Prostate gland (tissue), 2 donors: ENCODE measurements at regions of chr17 and their contacts with region 1.

Region 1: GRCh38 chr17:68600067-68600930 is 868 bp downstream of the FAM20A start:
- DNase-seq: no peak
- H3K4me3 ChIP-seq: peak overlapping the region; percentile 25 to 46
- H3K27ac ChIP-seq: peak overlapping the region; percentile 19 to 43
- H3K4me1 ChIP-seq: no peaks in the 10 kb centered on the region
- H3K27me3 ChIP-seq: peaks cover 10% of the 10 kb centered on the region
- CTCF ChIP-seq: peak in 2 of 4 experiments; percentile 32 to 47
- POLR2A ChIP-seq: no peak

Region 2: DNA sequence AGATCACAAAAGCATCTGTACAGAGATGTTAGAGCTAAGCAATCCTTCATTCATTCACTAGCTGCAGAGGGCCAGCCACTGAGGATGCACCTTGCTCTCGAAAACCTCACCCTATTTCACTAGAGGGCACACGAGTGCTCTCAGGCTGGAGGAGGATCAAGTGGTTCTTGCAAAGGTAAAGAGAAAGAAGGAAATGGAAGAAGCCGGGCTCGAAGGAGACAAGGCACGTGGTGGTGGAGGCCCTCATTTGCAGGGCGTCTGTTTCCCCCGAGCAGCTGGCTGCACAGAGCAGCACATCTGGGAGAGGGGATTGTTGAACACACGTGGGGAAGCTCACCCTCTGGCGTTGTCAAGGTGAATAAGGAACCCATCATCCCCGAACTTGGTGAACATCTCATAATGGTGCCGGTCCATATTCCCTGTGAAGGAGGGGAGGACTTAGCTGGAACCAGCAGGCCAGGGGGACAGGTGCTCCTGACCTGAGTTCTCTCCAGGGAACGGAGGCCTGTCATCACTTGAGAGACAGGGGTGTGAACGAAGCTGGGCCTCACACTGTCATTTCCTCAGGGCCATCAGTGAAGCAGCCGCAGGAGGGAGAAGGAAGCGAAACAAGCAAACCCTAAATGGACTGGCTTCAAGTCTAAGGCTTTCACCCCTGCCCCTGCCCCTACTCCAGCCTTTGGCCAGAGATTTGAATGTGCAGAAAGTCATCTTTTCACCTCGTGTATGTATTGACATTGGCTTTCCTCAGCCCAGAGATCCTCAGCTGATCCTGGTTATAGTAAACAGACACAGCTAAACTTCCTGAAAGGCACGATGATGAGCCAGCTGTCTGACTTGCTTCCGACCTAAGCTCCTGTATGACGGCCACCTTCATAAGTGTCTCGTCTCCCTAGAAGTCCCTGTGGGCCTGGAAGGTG is 60.5 kb before region 1 on chr17:
- intact Hi-C with region 1: loop called (anchors 10 kb)
- DNase-seq: no peak
- H3K4me3 ChIP-seq: no peak overlapping the region
- H3K27ac ChIP-seq: no peak overlapping the region
- H3K4me1 ChIP-seq: no peaks in the 10 kb centered on the region
- H3K27me3 ChIP-seq: no peaks in the 10 kb centered on the region
- CTCF ChIP-seq: peak in 2 of 4 experiments; percentile 24 to 34
- POLR2A ChIP-seq: no peak